Vagina (tissue), 2 donors: ENCODE measurements at regions of chr10 and their contacts with region 1.

Region 1: GRCh38 chr10:14837757-14838581 is at the starts of genes CDNF, HSPA14 and MSANTD7:
- DNase-seq: peak; percentile 98 to 99
- H3K4me3 ChIP-seq: peak within 1 kb of the TSS; percentile 80 to 88
- H3K27ac ChIP-seq: peak within 1 kb of the TSS; percentile 97
- H3K4me1 ChIP-seq: peaks cover 29% of the 10 kb centered on the region
- H3K27me3 ChIP-seq: no peaks in the 10 kb centered on the region
- CTCF ChIP-seq: no peak
- POLR2A ChIP-seq: peak in 1 of 2 donors; percentile 62
- total RNA-seq, gene CDNF: 7.4 TPM
- total RNA-seq, gene HSPA14: 8.3 TPM
- total RNA-seq, gene MSANTD7: 11.8 TPM

Region 2: GRCh38 chr10:14507176-14507575 is 330.8 kb before region 1 on chr10:
- intact Hi-C with region 1: loop called (anchors 10 kb)
- DNase-seq: no peak
- H3K4me3 ChIP-seq: no peak overlapping the region
- H3K27ac ChIP-seq: no peak overlapping the region
- H3K4me1 ChIP-seq: no peaks in the 10 kb centered on the region
- H3K27me3 ChIP-seq: no peaks in the 10 kb centered on the region
- CTCF ChIP-seq: no peak
- POLR2A ChIP-seq: no peak

Region 3: DNA sequence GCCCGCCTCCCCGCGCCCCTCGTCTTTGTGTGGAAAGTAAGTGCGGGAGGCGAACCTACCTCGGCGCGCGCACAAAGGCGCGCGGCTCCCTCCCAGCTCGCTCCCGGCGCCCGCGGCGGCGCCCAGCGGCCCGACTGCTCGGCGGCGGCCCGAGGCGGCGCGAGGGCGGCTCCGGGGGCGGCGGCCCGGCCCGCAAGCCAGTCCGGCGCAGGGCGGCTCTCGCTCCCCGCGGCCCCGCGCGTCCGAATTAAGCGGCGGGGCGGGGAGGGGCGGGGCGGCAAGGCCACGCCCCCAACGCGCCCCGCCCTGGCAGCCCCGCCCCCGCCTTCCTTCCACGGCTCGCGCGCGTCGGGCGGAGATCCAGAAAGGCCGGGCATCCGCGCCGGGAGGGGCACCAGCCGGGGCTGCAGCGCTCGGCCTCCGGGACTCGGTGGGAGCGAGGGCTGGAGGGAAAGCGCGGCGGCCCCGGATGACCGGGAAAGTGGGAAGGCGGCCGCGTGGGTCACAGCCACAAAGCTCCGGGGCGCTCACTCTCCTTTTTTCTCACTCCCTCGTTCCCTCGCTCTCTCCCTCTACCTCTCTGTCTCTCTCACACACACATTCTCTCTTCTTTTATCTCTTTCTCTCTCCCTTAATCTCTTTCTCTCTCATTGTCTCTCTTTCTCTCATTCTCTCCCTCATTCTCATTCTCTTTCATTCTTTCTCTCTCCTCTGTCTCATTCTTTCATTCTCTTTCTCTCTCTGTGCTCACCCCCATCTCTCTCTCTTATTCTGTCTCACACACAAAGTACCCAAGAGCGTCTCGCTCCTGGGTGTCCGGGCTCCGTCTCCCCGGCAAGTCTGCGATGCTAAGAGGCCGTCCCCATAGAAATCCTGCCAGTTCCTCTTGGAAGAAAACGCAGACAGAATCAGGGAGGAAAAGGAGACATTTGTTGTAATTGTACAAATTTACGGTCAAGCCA is 233.5 kb before region 1 on chr10:
- intact Hi-C with region 1: loop called (anchors 10 kb)
- DNase-seq: no peak
- H3K4me3 ChIP-seq: peak overlapping the region; percentile 61 to 84
- H3K27ac ChIP-seq: peak overlapping the region; percentile 87
- H3K4me1 ChIP-seq: peaks cover 26% of the 10 kb centered on the region
- H3K27me3 ChIP-seq: no peaks in the 10 kb centered on the region
- CTCF ChIP-seq: no peak
- POLR2A ChIP-seq: peak in 1 of 2 donors; percentile 50

Region 4: DNA sequence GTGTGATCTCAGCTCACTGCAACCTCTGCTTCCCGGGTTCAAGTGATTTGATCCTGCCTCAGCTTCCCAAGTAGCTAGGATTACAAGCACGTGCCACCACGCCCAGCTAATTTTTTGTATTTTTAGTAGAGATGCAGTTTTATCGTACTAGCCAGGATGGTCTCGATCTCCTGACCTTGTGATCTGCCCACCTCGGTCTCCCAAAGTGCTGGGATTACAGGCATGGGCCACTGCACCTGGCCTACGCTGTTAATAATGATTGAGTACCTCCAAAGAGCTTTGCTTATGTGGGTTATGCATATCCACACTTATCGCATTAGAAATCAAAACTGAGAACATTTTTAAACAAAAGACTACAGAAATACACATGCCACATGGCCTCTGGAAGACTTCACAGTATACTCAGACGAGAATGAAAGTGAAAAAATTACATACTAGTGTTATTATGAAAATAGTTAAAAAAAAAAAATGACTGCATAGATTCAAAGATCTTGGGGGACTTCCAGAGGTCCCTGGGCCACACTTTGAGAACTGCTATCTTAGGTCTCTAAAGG is 284.6 kb after region 1 on chr10:
- intact Hi-C with region 1: no loop called
- DNase-seq: no peak
- H3K4me3 ChIP-seq: no peak overlapping the region
- H3K27ac ChIP-seq: no peak overlapping the region
- H3K4me1 ChIP-seq: no peaks in the 10 kb centered on the region
- H3K27me3 ChIP-seq: no peaks in the 10 kb centered on the region
- CTCF ChIP-seq: no peak
- POLR2A ChIP-seq: no peak